ENCODE measurements at regions of chr12 and their contacts with region 1.

Region 1: DNA sequence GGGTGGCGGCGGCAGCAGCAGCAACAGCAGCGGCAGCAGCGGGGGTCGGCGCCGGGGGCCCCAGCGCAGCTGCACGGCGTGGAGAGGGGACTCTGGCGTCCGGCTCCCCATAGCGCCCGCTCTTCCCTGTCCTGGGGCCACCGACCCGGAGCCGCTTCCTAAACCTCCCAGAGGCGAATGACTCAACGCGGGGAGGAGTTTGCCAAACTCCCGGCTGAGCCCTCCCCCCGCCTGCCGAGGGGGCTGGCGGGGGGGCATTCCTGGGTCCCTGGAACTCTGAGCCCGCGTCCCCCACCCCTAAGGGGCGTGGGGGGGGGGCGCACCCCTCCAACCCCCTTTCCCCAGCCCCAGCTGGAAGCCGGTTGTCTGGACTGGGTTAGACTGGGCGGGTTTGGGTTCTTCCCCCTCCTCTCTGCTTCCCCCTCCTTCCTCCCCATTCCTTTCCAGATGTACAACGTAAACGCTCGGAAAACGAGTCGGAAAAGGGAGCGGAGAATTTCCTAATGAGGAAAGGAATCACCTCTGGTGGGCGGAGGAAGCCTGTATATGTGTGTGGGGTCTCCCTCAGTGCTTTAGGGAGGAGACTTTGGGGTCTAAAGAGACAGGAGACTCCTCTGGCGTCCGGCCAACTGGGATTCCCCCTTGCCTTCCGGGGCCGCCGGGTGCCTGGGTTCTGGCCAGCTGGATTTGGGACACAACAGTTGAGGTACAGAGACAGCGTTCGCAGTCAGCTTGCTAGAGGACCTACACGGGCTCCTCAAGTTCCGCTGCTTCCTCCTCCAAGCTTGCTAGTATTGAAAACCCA is at the start of gene ITGA5:
- DNase-seq: peak; percentile 52 to 71
- ATAC-seq: peak; percentile 41 to 57 (median 51)
- H3K4me3 ChIP-seq: peak within 1 kb of the TSS; percentile 81
- H3K4me3 Mint-ChIP-seq: peak within 1 kb of the TSS; percentile 96
- H3K27ac ChIP-seq: peak within 1 kb of the TSS; percentile 96
- H3K27ac Mint-ChIP-seq: peak within 1 kb of the TSS; percentile 87 to 91
- H3K4me1 ChIP-seq: peaks cover 58% of the 10 kb centered on the region
- H3K4me1 Mint-ChIP-seq: peaks cover 46 to 77% of the 10 kb centered on the region in 2 donors
- H3K27me3 ChIP-seq: no peaks in the 10 kb centered on the region
- H3K27me3 Mint-ChIP-seq: no peaks in the 10 kb centered on the region
- CTCF ChIP-seq: no peak
- total RNA-seq, gene ITGA5: 177 to 232 (median 207) TPM

Region 2: DNA sequence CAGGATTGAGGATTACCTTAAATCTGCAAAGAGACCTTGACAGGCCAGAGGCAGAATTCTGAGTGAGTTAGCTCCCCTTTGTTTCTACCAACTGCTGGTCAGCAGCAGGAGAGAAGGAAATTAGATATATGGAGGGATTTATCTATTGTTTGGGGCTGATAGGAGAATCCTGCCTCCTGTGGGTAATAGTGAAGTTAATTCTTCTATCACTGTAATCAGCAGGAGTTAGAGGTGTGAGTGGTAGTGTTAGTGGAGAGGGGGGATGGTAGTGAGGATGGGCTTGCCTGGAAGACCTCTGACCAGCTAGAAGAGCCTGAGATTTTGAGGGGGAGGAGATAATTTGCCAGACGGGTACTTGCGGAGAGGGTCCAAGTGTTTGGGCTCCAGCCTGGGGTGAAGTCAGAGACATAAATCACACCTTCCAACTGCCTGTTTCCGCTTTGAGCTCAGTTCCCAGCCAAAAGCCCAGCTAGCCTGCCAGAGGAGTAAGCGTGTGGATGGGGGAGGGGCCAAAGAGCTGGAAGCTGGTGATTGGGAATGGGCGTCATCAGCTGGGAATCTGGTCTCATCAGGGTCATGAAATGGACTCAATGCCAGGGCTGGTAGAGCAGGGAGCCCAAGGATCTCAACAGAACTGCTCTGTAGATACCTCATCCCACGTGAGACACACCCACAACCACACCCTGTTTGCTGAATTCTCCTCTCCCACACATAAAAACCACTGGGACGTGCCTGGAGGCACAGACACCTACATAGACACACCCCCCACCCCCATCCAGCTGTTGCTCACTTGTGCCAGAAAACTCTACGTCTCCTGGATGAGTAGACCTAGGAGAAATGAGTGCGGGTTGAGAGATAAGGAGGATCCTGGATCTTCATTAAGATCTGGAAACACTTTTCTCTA is 12.9 kb after region 1 on chr12:
- intact Hi-C with region 1: loop called (anchors 2 kb)
- DNase-seq: no peak
- ATAC-seq: no peak
- H3K4me3 ChIP-seq: no peak overlapping the region
- H3K4me3 Mint-ChIP-seq: peak overlapping the region; percentile 85
- H3K27ac ChIP-seq: peak overlapping the region; percentile 66
- H3K27ac Mint-ChIP-seq: peak overlapping the region; percentile 83 to 87
- H3K4me1 ChIP-seq: peaks cover 48% of the 10 kb centered on the region
- H3K4me1 Mint-ChIP-seq: peaks cover 70 to 74% of the 10 kb centered on the region in 2 donors
- H3K27me3 ChIP-seq: no peaks in the 10 kb centered on the region
- H3K27me3 Mint-ChIP-seq: no peaks in the 10 kb centered on the region
- CTCF ChIP-seq: no peak

Measured in natural killer cell (primary cell).